ENCODE measurements at regions of chr10 and their contacts with region 1.

Region 1: DNA sequence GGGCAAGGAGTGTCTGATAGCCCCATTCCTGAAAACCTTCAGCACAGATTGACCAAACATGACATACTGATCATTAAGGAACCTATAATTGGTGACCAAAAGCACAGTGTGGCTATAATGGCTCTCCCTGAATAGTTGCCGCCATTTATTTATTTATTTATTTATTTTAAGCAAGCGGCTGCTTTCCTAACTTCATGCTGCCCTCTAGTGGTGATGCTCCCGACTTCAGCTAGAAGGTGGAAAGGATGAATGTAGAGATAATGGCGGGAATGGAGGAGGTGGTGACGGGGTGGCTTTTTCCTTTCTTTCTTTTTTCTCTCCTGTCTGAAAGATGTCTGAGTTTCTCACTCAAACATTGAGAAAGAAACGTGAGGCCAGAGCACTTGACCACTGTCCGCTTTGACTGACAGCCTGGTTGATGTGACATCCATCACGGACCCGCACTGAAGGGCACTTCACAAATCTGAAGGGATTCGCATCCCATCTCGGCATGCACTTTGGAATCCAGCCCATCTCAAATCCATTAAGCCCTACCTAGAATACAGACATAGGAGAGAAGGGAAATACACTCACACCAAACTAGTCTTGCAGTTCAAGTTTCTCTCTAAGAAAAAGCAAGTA is 1090.1 kb downstream of the KCNMA1 start:
- DNase-seq: no peak
- ATAC-seq: peak; percentile 77
- H3K4me3 ChIP-seq: no peak overlapping the region
- H3K27ac ChIP-seq: no peak overlapping the region
- H3K4me1 ChIP-seq: no peaks in the 10 kb centered on the region
- H3K27me3 ChIP-seq: no peaks in the 10 kb centered on the region
- CTCF ChIP-seq: peak; percentile 62 to 65 (median 65)
- EP300 ChIP-seq: no peak
- POLR2A ChIP-seq: no peak
- RAD21 ChIP-seq: peak; percentile 79

Region 2: DNA sequence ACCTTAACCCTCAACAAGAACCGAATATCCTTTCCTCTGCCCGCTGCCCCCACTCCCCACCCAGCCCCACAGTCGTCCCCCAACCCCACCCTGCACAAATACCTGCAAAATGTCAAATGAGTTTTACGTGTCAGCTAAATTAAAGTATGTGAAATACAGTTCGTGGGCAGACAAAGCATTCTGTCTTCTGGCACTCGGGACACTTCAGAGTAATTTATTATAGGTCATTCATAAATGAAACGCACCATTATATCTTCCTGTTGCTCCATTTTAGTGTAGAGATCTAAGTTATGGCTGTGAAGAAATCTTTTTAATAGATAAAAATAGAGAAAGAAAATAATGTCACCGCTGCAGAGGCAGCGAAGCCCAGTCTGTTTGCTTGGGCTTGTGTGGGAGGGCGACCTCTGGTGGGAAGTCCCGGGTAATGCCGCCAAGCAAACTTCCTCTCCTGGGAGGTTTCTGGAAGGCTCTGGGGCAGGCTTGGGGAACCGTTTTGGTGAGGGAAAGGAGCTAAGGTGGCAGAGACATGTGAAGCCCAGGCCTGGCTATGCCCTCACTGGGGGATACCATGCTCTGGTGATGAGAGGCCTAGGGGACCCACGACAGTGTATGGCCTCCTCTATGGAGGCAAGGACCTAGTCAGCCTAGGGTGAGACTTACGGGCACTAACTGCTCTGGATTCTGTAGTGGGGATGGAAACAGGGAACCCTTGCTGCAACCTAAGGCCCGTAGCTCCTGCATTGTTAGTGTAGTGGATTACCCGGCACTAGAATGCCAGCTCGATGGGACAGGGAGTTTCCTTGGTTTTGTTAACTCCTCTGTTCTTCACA is 511.1 kb before region 1 on chr10:
- CTCF ChIA-PET with region 1: no interaction called
- POLR2A ChIA-PET with region 1: no interaction called
- RAD21 ChIA-PET with region 1: no interaction called
- SMC1A ChIA-PET with region 1: interaction called, 3 read pairs
- in situ Hi-C with region 1: no loop called
- intact Hi-C with region 1: loop called (anchors 5 kb)
- DNase-seq: no peak
- ATAC-seq: peak; percentile 90
- H3K4me3 ChIP-seq: no peak overlapping the region
- H3K27ac ChIP-seq: no peak overlapping the region
- H3K4me1 ChIP-seq: no peaks in the 10 kb centered on the region
- H3K27me3 ChIP-seq: no peaks in the 10 kb centered on the region
- CTCF ChIP-seq: peak; percentile 86 to 88 (median 87)
- EP300 ChIP-seq: no peak
- POLR2A ChIP-seq: no peak
- RAD21 ChIP-seq: peak; percentile 66

Region 3: GRCh38 chr10:77111611-77112550 is 564.4 kb after region 1 on chr10:
- CTCF ChIA-PET with region 1: no interaction called
- POLR2A ChIA-PET with region 1: no interaction called
- RAD21 ChIA-PET with region 1: no interaction called
- SMC1A ChIA-PET with region 1: no interaction called
- in situ Hi-C with region 1: no loop called
- intact Hi-C with region 1: loop called (anchors 5 kb)
- DNase-seq: peak; percentile 13
- ATAC-seq: peak; percentile 82
- H3K4me3 ChIP-seq: no peak overlapping the region
- H3K27ac ChIP-seq: no peak overlapping the region
- H3K4me1 ChIP-seq: no peaks in the 10 kb centered on the region
- H3K27me3 ChIP-seq: no peaks in the 10 kb centered on the region
- CTCF ChIP-seq: peak; percentile 70 to 76 (median 73); a peak in 5 of 6 replicates
- EP300 ChIP-seq: no peak
- POLR2A ChIP-seq: no peak
- RAD21 ChIP-seq: peak; percentile 83

Measured in GM12878 (cell line).